BJ (cell line): ENCODE measurements at regions of chr2 and their contacts with region 1.

Region 1: DNA sequence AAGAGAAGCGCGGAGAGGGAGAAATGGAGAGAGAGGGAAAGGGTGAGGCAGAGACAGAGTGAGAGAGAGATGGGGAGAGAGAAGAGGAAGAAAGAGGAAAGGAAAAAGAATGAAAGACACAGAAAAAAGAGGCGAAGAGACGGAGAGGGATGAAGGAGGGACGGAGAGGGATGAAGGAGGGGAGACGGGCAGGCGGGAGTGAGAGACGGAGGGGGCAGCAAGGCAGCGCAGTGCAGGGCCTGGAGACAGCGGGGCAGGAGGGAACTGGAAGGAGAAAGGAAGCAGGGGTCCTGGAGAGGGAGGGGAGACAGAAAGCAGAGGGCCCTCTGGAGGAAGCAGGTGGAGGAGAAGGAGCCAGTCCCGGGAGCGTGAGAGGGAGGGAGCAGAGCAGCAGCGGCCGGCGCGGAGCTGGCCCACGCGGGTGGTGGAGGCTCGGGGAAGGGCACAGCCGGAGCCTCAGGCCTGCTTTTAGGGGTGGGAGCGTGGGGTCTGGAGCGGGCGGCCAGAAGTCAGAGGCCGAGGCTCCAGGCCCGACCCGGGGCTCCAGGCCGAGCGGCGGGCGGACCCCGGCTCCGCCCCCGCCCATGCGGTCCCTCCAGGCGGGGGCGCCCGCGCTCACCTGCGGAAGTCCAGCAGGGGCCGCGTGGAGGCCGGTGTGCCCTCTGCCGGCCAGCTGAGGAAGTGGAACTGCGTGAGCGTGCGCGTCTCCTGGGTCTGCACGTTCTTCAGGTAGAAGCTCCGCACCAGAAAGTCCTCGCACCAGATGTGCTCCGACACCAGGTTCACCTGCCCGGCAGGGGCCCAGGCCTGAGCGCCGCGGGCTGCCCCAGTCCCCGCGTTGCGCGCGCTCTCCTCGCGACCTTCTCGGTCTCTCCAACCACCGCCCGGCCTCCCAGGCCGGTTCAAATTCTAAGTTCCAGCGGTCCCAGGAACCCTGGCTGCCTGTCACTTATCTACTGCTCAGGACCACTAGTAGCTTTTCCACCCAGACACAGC is 14.5 kb downstream of the PTPRN start:
- DNase-seq: no peak
- H3K4me3 ChIP-seq: peak overlapping the region; percentile 41
- H3K27me3 ChIP-seq: peaks cover 1% of the 10 kb centered on the region; the same call in 1 of the 2 replicates
- CTCF ChIP-seq: peak; percentile 92

Region 2: GRCh38 chr2:219160186-219161017 is 134.3 kb before region 1 on chr2 and contains the start of gene NHEJ1:
- CTCF ChIA-PET with region 1: interaction called, 105 read pairs
- POLR2A ChIA-PET with region 1: no interaction called
- DNase-seq: peak; percentile 63
- H3K4me3 ChIP-seq: peak within 1 kb of the TSS; percentile 73
- H3K27me3 ChIP-seq: no peaks in the 10 kb centered on the region
- CTCF ChIP-seq: peak; percentile 99
- polyA plus RNA-seq, gene NHEJ1: 23.9 and 24.1 TPM in 2 replicates

Region 3: GRCh38 chr2:219206442-219207253 is 88.0 kb before region 1 on chr2 and contains the start of gene ZFAND2B:
- CTCF ChIA-PET with region 1: interaction called, 15 read pairs
- POLR2A ChIA-PET with region 1: no interaction called
- DNase-seq: peak; percentile 55
- H3K4me3 ChIP-seq: peak within 1 kb of the TSS; percentile 63
- H3K27me3 ChIP-seq: no peaks in the 10 kb centered on the region
- CTCF ChIP-seq: 0 out of 2 replicates have a peak, but pooled peaks have one; percentile 11
- polyA plus RNA-seq, gene ZFAND2B: 45.6 and 62.9 TPM in 2 replicates

Region 4: DNA sequence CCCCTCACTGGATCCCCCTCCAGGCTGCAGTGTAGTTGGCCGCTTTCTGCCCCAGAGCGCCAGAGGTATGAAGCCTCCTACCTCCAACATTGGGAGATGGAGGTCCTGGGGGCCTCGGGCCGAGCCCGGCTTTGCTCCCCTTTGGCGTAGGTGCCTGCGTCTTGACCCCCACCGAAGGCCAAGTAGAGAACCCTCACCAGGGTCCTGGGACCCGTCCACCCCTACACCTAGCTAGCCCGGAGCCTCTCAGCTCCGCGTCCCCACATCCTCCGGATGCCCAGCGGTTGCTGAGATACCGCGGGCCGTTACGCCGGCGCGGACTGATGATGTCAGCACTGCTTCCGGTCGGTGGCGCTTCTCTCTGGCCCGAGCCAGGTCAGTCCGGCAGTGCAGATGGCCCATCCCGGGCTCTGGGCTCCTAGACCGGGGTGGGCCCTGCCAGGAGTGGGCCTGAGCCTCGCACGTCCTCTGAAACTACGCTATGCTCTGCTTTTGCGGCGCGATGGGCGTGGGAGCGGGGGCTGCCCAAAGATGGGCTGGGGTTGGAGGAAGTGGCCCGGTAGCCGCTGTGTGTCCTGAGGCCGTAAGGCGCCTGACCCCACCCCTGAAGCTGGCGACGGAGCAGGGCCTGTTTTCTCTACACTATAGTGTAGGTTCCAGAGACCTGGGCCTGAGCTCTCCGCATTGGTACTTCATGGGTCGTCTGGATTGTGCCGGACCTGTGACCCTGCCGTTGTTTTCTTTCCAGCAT is 49.3 kb before region 1 on chr2 and contains the starts of genes GLB1L and STK16:
- CTCF ChIA-PET with region 1: interaction called, 22 read pairs
- POLR2A ChIA-PET with region 1: no interaction called
- DNase-seq: no peak
- H3K4me3 ChIP-seq: peak within 1 kb of the TSS; percentile 90
- H3K27me3 ChIP-seq: no peaks in the 10 kb centered on the region
- CTCF ChIP-seq: no peak
- polyA plus RNA-seq, gene GLB1L: 9.4 and 9.5 TPM in 2 replicates
- polyA plus RNA-seq, gene STK16: 41.6 and 64.2 TPM in 2 replicates

Region 5: GRCh38 chr2:219308142-219309093 is 13.8 kb after region 1 on chr2:
- CTCF ChIA-PET with region 1: interaction called, 403 read pairs
- POLR2A ChIA-PET with region 1: no interaction called
- DNase-seq: no peak
- H3K4me3 ChIP-seq: peak overlapping the region; percentile 32
- H3K27me3 ChIP-seq: peaks cover 11% of the 10 kb centered on the region
- CTCF ChIP-seq: no peak

Region 6: DNA sequence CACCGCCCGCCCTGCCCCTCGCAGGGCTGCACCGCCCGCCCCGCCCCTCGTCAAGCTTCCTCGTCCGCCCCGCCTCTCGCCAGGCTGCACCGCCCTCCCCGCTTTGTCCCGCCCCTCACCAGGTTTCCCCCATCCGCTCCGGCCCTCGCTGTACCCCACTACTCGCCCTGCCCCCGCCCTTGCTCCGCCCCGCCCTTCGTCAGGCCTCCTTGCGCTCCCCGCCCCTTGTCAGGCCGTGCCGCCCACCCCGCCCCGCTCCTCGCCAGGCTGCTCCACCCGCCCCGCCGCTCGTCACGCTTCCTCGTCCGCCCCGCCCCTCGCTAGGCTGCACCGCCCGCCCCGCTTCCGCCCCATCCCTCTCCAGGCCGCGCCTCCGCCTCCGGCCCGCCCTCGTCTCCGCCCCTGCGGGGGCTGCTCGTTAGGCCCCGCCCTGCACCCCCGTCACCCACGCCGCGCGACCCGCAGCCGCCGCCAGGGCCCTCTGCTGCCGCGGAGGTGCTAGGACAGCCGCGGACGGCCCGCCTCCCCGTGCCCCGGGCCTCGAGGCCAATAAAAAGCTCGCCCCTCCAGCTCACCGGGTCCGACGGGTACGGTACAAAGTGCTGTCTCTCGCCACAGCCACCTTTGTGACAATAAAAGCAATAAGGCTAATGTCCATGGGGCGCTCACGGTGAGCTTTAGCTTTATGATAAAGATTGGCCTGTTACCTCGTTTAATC is 93.6 kb after region 1 on chr2:
- CTCF ChIA-PET with region 1: interaction called, 19 read pairs
- POLR2A ChIA-PET with region 1: no interaction called
- DNase-seq: peak; percentile 69
- H3K4me3 ChIP-seq: peak overlapping the region; percentile 42
- H3K27me3 ChIP-seq: no peaks in the 10 kb centered on the region
- CTCF ChIP-seq: peak; percentile 43

Region 7: DNA sequence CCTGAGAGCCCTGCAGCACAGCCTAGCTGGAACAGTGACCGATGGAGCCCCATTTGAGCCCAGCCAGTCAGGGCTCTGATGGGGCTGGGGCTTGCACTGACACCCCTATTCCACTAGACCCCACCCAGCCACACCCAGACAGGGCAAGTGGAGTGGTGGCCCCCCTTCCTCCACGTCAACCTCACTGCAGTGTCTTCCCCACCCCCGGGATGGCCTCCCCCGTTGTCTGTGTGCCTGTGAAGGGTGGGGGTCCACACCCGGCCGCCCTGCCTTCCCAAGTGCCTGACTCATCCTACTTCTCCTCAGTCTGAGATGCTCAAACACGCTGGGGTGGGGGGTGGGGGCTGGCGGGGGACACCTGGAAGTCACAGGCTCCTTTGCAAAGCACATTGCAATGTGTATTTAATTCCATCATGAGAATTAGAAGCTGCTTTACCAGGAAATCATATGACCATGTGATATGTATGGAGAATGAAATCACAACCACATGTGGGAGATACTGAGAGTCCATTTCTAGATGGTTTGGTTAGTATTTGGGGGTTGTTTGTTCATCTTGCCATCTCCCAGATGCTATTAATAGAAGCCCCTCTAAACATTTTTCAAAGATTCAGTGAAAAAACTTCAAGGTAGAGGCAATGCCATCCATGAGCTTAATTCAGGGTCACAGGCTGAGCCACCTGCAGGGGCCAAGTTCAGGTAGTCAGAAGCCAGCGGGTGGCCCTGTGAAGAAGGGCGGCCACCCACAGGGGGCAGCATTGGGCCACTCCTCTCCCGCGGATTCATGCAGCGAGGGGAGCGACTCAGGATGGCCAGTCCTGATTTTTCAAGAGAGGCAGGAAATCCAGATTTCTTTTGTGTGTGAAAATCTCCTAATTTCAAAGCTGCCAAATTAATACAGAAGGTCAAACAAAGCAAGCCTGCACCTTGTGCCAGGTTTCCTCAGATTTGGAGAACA is 181.3 kb after region 1 on chr2:
- CTCF ChIA-PET with region 1: no interaction called
- POLR2A ChIA-PET with region 1: no interaction called
- DNase-seq: no peak
- H3K4me3 ChIP-seq: no peak overlapping the region
- H3K27me3 ChIP-seq: no peaks in the 10 kb centered on the region
- CTCF ChIP-seq: peak; percentile 93